ENCODE measurements at regions of chr4 and their contacts with region 1.

Region 1: DNA sequence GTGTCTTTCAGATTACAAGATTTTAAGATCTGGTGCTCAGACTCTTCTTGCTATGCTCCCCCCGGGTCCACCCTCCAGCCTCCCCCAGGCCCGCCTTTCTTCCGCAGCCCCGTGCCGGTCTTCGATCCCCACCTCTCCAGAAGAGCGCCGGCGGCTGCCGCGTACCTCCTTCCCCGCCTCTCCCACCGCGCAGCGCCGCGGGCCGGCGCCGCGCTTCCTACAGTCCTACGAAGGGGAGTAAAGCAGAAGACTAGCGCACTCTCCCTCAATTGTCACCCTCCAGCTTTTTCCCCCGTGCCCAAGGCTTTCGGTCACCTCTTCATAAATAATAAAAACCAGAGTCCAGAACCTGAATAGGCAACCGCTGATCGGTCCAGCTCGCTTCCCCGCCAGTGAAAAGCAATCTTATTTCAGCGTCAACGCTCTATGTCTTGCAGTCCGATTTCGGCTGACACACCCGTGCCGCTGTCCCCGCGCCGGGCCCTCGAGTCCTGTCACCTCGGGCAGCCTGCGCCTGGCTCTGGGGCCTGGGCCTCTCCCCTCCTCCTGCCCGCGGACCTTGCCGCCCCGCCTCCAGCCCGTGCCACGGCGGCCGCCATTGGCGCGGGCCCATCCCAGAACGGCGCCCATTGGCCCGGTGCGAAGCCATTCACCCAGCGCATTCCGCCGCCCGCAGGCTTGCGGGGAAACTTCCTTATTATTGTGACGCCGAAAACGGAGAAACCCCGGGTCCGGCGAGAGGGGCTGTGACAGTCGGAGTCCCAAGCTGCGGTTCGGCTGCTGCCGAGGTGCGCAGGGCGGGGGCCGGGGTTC is at the start of gene HERC3:
- DNase-seq: peak; percentile 92
- ATAC-seq: peak; percentile 87
- H3K4me3 Mint-ChIP-seq: peak within 1 kb of the TSS; percentile 90
- H3K27ac Mint-ChIP-seq: peak within 1 kb of the TSS; percentile 90
- H3K4me1 Mint-ChIP-seq: peaks cover 43% of the 10 kb centered on the region
- H3K27me3 Mint-ChIP-seq: no peaks in the 10 kb centered on the region
- total RNA-seq, gene HERC3: 26.2 to 41.8 TPM

Region 2: GRCh38 chr4:87989765-87990164 is 602.2 kb before region 1 on chr4:
- CTCF ChIA-PET with region 1: no interaction called
- POLR2A ChIA-PET with region 1: no interaction called
- intact Hi-C with region 1: no loop called
- DNase-seq: no peak
- ATAC-seq: no peak
- H3K4me3 Mint-ChIP-seq: no peak overlapping the region
- H3K27ac Mint-ChIP-seq: no peak overlapping the region
- H3K4me1 Mint-ChIP-seq: peaks cover 3% of the 10 kb centered on the region
- H3K27me3 Mint-ChIP-seq: peaks cover 9% of the 10 kb centered on the region

Region 3: DNA sequence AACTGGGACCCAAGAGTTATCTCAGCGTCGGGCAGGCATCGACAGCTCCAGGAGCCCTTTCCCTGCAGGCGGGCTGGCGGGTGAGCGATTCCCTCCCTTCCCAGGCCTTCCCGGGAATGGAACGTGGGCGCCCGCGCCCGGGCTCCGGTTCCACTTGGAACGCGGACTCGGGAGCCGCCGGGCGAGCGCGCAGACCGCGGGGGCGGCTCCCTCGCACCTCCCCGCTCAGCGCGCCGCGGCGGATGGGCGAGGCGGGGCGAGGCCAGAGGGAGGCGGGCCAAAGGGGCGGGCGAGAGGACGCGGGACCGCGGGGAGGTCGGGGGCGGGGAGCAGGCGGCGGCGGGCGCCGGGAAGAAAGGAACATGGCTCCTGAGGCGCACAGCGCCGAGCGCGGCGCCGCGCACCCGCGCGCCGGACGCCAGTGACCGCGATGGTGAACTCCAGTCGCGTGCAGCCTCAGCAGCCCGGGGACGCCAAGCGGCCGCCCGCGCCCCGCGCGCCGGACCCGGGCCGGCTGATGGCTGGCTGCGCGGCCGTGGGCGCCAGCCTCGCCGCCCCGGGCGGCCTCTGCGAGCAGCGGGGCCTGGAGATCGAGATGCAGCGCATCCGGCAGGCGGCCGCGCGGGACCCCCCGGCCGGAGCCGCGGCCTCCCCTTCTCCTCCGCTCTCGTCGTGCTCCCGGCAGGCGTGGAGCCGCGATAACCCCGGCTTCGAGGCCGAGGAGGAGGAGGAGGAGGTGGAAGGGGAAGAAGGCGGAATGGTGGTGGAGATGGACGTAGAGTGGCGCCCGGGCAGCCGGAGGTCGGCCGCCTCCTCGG is 584.5 kb before region 1 on chr4 and contains the start of gene PKD2:
- CTCF ChIA-PET with region 1: no interaction called
- POLR2A ChIA-PET with region 1: no interaction called
- intact Hi-C with region 1: loop called in 1 of 2 experiments (anchors 5 kb)
- DNase-seq: peak; percentile 89
- ATAC-seq: peak; percentile 92
- H3K4me3 Mint-ChIP-seq: peak within 1 kb of the TSS; percentile 84
- H3K27ac Mint-ChIP-seq: peak within 1 kb of the TSS; percentile 72
- H3K4me1 Mint-ChIP-seq: peaks cover 32% of the 10 kb centered on the region
- H3K27me3 Mint-ChIP-seq: peaks cover 5% of the 10 kb centered on the region
- total RNA-seq, gene PKD2: 4.1 to 5.0 TPM

Region 4: DNA sequence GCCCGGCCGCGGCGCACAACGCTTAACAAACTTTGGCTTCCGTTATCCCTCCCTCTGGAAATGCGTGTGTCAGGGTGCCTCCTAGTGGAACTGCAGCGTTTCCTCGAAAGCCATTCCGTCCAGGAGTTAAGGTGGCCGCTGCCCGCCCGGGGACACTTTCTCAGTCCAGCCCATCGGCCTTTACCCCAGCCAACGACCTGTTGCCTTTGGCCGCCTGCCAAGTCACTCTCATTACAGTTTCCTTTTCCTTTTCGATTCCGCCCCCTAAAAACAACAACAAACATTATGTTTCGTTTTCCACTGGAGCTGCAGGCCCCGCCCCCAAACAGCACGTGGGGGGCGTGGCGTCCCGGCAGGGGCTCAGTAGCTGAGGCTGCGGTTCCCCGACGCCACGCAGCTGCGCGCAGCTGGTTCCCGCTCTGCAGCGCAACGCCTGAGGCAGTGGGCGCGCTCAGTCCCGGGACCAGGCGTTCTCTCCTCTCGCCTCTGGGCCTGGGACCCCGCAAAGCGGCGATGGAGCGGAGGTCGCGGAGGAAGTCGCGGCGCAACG is 135.2 kb before region 1 on chr4 and contains the start of gene HERC5:
- CTCF ChIA-PET with region 1: interaction called, 3 read pairs
- POLR2A ChIA-PET with region 1: no interaction called
- intact Hi-C with region 1: loop called (anchors 2 kb)
- DNase-seq: peak; percentile 94
- ATAC-seq: peak; percentile 94
- H3K4me3 Mint-ChIP-seq: peak within 1 kb of the TSS; percentile 87
- H3K27ac Mint-ChIP-seq: peak within 1 kb of the TSS; percentile 100
- H3K4me1 Mint-ChIP-seq: peaks cover 7% of the 10 kb centered on the region
- H3K27me3 Mint-ChIP-seq: no peaks in the 10 kb centered on the region
- total RNA-seq, gene HERC5: 21.1 TPM

Region 5: DNA sequence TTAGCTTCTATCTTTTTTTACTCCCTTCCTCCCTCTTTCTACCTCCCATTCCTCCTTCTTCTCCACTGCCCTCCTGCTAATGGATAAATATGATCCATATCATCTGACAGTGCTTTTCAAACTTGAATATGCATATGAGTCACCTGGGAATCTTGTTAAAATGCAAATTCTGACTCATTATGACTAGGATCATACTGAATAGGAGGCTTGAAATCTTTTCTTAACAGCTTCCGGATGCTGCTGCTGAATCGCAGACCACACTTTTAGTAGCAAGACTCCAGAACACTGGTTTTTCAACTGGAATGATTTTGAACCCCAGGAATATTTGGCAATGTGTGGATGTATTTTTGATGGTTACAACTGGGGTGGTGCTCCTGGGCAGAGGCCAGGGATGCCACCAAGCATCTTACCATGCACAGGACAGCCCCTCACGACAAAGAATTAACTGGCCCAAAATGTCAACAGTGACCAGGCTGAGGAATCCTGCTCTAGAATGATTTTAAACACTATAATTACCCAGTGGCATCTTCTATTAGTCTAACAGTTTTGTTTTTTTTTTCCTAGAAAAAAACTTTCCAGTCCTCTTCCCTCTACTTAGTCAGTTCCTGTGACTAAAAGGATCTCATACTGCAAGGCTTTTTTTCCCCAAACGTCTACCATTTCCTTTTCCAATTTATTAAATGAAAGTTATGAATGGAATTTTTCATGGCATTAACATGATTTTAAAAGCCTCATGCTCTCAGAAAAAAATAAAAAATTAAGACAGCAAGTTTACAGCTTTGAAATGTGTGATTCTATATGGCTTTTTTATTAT is 57.8 kb before region 1 on chr4:
- CTCF ChIA-PET with region 1: interaction called, 7 read pairs
- POLR2A ChIA-PET with region 1: no interaction called
- intact Hi-C with region 1: loop called in 1 of 2 experiments (anchors 2 kb)
- DNase-seq: no peak
- ATAC-seq: no peak
- H3K4me3 Mint-ChIP-seq: no peak overlapping the region
- H3K27ac Mint-ChIP-seq: no peak overlapping the region
- H3K4me1 Mint-ChIP-seq: peaks cover 23% of the 10 kb centered on the region
- H3K27me3 Mint-ChIP-seq: no peaks in the 10 kb centered on the region

Region 6: DNA sequence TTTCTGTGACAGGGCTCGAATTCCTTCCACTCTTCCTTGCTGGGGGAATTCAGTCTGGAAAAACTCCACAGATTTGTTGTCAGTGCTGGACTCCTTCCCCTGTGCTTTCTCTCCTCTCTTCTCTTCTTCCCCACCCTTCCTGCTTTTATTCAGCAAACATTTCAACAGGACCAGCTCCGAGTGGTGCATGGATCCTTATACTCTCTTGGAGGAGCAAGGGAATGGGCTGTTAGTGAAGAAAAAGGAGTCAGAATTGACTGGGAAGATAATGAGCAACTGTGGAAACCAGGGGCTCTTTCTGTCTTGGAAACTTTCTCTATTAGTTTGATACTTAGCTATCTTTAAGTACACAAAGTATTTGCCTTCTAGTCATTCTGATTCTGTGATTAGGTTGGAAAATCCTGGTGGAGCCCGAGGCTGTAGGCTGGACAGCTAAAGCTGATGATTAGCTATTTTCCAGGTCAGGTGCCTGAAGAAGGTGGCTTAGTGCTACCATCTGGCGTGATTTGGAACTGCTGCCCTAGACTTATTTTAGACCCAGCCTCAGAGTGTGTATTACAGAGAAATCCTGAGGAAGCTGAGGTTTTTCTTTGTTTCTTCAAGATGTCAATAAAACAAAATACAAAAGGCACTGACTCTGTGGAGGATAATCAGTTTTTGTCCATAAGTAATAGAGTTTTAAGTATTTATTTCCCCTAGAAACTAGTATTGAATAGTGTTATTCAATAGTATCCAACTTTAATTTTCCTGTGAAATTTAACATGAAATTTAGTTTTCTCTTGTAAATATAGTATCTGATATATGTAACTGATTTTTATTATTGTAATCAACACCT is 67.3 kb after region 1 on chr4:
- CTCF ChIA-PET with region 1: interaction called, 5 read pairs
- POLR2A ChIA-PET with region 1: no interaction called
- intact Hi-C with region 1: loop called in 1 of 2 experiments (anchors 2 kb)
- DNase-seq: peak; percentile 54
- ATAC-seq: peak; percentile 81
- H3K4me3 Mint-ChIP-seq: no peak overlapping the region
- H3K27ac Mint-ChIP-seq: no peak overlapping the region
- H3K4me1 Mint-ChIP-seq: peaks cover 7% of the 10 kb centered on the region
- H3K27me3 Mint-ChIP-seq: no peaks in the 10 kb centered on the region

Region 7: DNA sequence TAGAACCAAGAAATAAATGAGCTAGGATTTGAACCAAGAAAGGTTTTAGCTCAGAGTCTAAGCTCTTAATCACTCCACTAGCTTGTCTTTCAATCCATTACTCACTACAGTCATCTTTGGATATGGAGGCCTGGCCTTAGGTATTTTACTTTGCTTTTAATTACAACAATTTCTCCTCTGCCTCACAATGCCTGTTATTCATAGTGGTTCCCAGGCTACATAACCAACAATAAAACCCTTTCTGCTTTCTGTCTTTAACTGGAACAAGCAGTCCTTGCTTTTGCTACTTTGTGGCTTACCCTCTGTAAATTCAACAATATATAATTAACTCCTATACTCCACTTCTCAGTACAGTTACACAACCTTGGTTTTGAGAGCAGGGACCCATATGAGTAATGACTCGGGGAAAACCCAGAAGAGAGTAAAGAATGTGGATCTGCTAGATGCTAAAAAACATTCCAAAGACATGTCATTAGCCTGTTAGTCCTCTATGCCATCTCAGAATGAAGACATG is 200.3 kb after region 1 on chr4:
- CTCF ChIA-PET with region 1: no interaction called
- POLR2A ChIA-PET with region 1: no interaction called
- intact Hi-C with region 1: loop called in 1 of 2 experiments (anchors 2 kb)
- DNase-seq: no peak
- ATAC-seq: peak; percentile 88
- H3K4me3 Mint-ChIP-seq: no peak overlapping the region
- H3K27ac Mint-ChIP-seq: no peak overlapping the region
- H3K4me1 Mint-ChIP-seq: peaks cover 18% of the 10 kb centered on the region
- H3K27me3 Mint-ChIP-seq: no peaks in the 10 kb centered on the region

Region 8: GRCh38 chr4:89110986-89111832 is 519.2 kb after region 1 on chr4 and contains the start of gene TIGD2:
- CTCF ChIA-PET with region 1: no interaction called
- POLR2A ChIA-PET with region 1: no interaction called
- intact Hi-C with region 1: loop called (anchors 1 to 10 kb)
- DNase-seq: peak; percentile 93
- ATAC-seq: peak; percentile 95
- H3K4me3 Mint-ChIP-seq: peak within 1 kb of the TSS; percentile 73
- H3K27ac Mint-ChIP-seq: peak within 1 kb of the TSS; percentile 86
- H3K4me1 Mint-ChIP-seq: peaks cover 18% of the 10 kb centered on the region
- H3K27me3 Mint-ChIP-seq: peaks cover 16% of the 10 kb centered on the region
- total RNA-seq, gene TIGD2: 2.1 to 2.3 TPM

Region 9: GRCh38 chr4:89939994-89940393 is 1348.0 kb after region 1 on chr4:
- CTCF ChIA-PET with region 1: no interaction called
- POLR2A ChIA-PET with region 1: no interaction called
- intact Hi-C with region 1: no loop called
- DNase-seq: no peak
- ATAC-seq: no peak
- H3K4me3 Mint-ChIP-seq: no peak overlapping the region
- H3K27ac Mint-ChIP-seq: no peak overlapping the region
- H3K4me1 Mint-ChIP-seq: no peaks in the 10 kb centered on the region
- H3K27me3 Mint-ChIP-seq: peaks cover 2% of the 10 kb centered on the region

Measured in activated CD4-positive, alpha-beta T cell treated with anti-CD3 and anti-CD28 coated beads for 36 hours (primary cell).